ENCODE measurements at regions of chr6 and their contacts with region 1.

Region 1: DNA sequence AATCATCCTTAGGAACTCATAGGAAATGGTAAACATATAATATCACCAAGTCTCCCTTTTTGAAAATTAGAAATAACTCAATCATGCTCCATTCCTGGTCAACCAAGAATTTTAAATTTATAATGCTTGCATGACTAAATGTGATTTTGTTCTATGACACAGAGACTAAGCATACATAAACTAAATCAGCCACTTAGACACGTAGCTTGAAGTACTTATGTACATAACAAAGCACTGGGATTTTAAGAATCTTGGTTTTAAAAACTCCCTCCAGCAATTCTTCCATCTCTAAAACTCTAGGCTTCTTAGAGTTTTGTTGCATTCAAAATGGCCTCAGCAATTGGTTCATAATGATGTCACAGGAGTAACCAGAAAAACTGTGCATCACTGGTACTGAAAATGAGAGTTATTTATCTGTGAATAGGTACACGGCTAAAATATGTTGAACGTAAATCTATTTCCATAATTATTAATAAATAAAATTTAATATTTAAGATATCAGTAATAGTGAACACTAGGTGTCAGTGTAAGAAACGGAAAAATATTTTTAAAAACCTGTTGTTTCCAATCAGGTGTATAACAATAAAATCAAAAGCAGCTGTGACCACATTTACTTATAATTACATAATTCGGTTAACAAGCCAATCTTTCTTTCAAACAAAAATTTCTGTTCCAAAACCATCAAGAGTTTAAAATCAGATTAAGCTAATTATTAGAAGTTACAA is 241.6 kb upstream of the RUNX2 start:
- DNase-seq: no peak
- ATAC-seq: no peak
- H3K4me3 ChIP-seq: no peak overlapping the region
- H3K27ac ChIP-seq: no peak overlapping the region
- H3K4me1 ChIP-seq: no peaks in the 10 kb centered on the region
- H3K27me3 ChIP-seq: no peaks in the 10 kb centered on the region
- CTCF ChIP-seq: no peak; the same call in 1 of the 2 replicates

Region 2: DNA sequence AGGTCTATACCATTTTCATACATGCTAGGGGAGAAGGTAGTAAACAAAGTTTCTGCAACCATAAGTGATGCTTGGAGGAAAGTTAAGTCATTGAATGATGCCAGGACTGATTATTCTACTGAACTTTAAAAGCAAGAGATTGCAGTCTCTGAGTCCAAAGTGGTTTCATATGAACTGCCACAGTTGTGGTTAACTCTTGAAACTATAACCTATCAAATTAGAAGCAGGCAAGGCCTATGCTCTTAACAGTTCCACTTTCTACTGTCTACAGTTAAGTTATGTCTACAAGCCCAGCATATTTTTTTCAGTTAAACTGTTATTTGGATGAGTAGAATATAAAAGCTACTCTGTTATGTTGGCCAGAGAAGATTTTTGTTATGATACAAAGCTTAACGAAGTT is 84.9 kb before region 1 on chr6:
- CTCF ChIA-PET with region 1: no interaction called
- POLR2A ChIA-PET with region 1: no interaction called
- in situ Hi-C with region 1: no loop called
- intact Hi-C with region 1: no loop called
- DNase-seq: no peak
- ATAC-seq: no peak
- H3K4me3 ChIP-seq: no peak overlapping the region
- H3K27ac ChIP-seq: no peak overlapping the region
- H3K4me1 ChIP-seq: no peaks in the 10 kb centered on the region
- H3K27me3 ChIP-seq: no peaks in the 10 kb centered on the region
- CTCF ChIP-seq: no peak

Region 3: DNA sequence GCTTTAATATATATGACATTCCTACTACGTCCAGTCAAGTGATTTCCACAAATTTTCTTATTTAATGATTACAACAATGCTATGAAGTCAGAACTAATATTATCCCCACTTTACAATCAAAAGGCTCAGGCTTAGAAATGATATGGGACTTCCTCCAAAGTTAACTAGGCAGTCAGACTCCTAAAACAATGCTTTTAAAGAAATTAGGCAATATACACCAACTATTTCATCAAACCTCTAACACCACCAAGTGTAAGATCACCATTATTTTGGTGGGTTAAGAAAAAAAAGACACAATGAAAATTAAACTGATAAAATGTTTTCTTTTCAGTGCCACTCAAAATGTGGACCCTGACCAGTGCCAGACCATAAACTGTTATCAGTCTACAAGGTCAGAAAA is 14.5 kb before region 1 on chr6:
- CTCF ChIA-PET with region 1: no interaction called
- POLR2A ChIA-PET with region 1: no interaction called
- in situ Hi-C with region 1: no loop called
- intact Hi-C with region 1: loop called (anchors 1 kb)
- DNase-seq: no peak
- ATAC-seq: no peak
- H3K4me3 ChIP-seq: no peak overlapping the region
- H3K27ac ChIP-seq: no peak overlapping the region
- H3K4me1 ChIP-seq: no peaks in the 10 kb centered on the region
- H3K27me3 ChIP-seq: no peaks in the 10 kb centered on the region
- CTCF ChIP-seq: no peak